Activated CD4-positive, alpha-beta T cell treated with anti-CD3 and anti-CD28 coated beads for 36 hours (primary cell): ENCODE measurements at regions of chr12 and their contacts with region 1.

Region 1: DNA sequence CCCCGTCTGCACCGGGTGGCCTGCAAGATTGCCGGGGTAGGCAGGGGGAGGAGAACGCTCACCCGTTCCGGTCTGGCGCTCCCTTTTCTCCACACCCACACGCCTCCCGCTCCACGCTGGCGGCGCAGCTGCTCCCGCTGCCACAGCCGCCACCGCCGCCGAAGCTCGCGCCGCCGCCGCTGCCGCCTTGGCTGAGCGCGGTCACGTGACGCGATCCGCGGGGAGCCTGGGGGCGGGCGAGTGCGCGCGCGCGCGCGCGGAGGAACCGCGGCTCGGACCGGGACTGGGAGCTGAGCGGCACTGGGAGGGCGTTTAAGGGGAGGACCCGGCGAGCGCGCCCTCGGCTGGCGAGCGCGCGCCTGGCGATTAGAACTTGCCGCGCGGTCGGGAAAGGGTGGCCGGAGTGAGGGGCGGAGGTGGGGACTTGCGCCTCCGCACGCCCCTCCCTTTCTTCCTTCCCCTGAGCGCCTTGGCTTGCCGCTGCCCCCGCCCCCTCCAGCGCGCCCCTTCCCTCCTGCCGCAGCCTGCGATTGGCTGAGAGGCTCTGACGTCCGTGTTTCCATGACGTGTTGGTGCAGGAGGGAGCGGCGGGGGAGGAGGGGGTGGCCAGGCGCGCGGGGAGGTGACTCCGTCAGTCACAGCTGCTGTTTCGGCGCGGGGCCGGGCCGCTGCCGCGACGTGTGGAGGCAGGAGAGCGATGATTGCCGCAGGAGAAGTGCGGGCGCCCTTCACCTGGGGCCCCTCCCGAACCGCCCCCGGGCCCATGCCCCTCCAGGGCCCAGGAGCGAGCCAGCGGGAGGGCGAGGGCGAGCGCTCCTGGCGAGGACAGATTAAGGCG is 738 bp upstream of the ATP2B1 start:
- DNase-seq: peak; percentile 99
- ATAC-seq: peak; percentile 81
- H3K4me3 Mint-ChIP-seq: peak overlapping the region; percentile 79
- H3K27ac Mint-ChIP-seq: peak overlapping the region; percentile 84
- H3K4me1 Mint-ChIP-seq: peaks cover 30% of the 10 kb centered on the region
- H3K27me3 Mint-ChIP-seq: no peaks in the 10 kb centered on the region

Region 2: GRCh38 chr12:88141770-88142609 is 1567.4 kb before region 1 on chr12 and contains the starts of genes CEP290 and TMTC3:
- CTCF ChIA-PET with region 1: no interaction called
- POLR2A ChIA-PET with region 1: no interaction called
- intact Hi-C with region 1: loop called in 1 of 2 experiments (anchors 5 kb)
- DNase-seq: peak; percentile 95
- ATAC-seq: peak; percentile 98
- H3K4me3 Mint-ChIP-seq: peak within 1 kb of the TSS; percentile 94
- H3K27ac Mint-ChIP-seq: peak within 1 kb of the TSS; percentile 92
- H3K4me1 Mint-ChIP-seq: peaks cover 42% of the 10 kb centered on the region
- H3K27me3 Mint-ChIP-seq: no peaks in the 10 kb centered on the region
- total RNA-seq, gene CEP290: 15.5 to 17.0 TPM
- total RNA-seq, gene TMTC3: 5.8 to 6.2 TPM

Region 3: DNA sequence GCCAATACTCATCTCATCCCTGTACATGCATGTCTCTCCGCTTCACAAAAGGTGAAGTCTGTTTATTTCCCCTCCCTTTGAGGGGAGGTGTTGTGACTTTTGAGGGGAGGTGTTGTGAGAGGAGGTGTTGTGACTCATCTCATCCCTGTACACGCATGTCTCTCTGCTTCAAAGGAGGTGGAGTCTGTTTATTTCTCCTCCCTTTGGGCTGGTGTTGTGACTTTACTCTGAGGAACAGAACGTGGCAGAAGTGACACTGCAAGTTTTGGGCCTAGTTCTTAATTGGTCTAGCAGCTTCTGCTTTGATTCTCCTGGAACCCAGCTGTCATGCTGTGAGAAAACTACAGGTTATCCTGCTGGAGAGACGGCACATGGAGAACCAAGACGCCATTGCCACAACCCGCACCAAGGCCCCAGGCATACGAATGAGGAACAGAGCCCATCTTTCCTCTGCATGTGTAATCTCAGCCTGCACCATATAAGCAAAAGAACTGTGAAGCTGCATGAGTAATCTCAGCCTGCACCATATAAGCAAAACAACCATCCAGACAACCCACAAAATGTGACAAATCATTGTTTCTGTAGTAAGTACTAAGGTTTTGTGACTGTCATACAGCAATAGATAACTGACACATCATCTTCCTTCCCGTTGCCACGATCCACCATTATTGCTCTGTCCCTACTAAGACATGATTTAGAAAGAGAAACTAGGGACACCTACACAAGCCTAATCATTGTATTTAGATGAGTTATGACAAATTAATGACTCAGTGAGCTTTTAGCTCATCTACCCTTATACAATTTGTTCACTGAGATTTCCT is 214.8 kb before region 1 on chr12:
- CTCF ChIA-PET with region 1: no interaction called
- POLR2A ChIA-PET with region 1: no interaction called
- intact Hi-C with region 1: loop called in 1 of 2 experiments (anchors 1 kb)
- DNase-seq: peak; percentile 72
- ATAC-seq: peak; percentile 90
- H3K4me3 Mint-ChIP-seq: peak overlapping the region; percentile 28
- H3K27ac Mint-ChIP-seq: peak overlapping the region; percentile 92
- H3K4me1 Mint-ChIP-seq: peaks cover 27% of the 10 kb centered on the region
- H3K27me3 Mint-ChIP-seq: no peaks in the 10 kb centered on the region

Region 4: GRCh38 chr12:89597770-89598169 is 111.6 kb before region 1 on chr12:
- CTCF ChIA-PET with region 1: interaction called, 3 read pairs
- POLR2A ChIA-PET with region 1: no interaction called
- intact Hi-C with region 1: loop called (anchors 2 to 5 kb)
- DNase-seq: no peak
- ATAC-seq: peak; percentile 44
- H3K4me3 Mint-ChIP-seq: peak overlapping the region; percentile 33
- H3K27ac Mint-ChIP-seq: no peak overlapping the region
- H3K4me1 Mint-ChIP-seq: peaks cover 24% of the 10 kb centered on the region
- H3K27me3 Mint-ChIP-seq: no peaks in the 10 kb centered on the region

Region 5: GRCh38 chr12:89733579-89734201 is 24.3 kb after region 1 on chr12:
- CTCF ChIA-PET with region 1: no interaction called
- POLR2A ChIA-PET with region 1: no interaction called
- intact Hi-C with region 1: no loop called
- DNase-seq: no peak
- ATAC-seq: no peak
- H3K4me3 Mint-ChIP-seq: no peak overlapping the region
- H3K27ac Mint-ChIP-seq: no peak overlapping the region
- H3K4me1 Mint-ChIP-seq: peaks cover 5% of the 10 kb centered on the region
- H3K27me3 Mint-ChIP-seq: no peaks in the 10 kb centered on the region

Region 6: DNA sequence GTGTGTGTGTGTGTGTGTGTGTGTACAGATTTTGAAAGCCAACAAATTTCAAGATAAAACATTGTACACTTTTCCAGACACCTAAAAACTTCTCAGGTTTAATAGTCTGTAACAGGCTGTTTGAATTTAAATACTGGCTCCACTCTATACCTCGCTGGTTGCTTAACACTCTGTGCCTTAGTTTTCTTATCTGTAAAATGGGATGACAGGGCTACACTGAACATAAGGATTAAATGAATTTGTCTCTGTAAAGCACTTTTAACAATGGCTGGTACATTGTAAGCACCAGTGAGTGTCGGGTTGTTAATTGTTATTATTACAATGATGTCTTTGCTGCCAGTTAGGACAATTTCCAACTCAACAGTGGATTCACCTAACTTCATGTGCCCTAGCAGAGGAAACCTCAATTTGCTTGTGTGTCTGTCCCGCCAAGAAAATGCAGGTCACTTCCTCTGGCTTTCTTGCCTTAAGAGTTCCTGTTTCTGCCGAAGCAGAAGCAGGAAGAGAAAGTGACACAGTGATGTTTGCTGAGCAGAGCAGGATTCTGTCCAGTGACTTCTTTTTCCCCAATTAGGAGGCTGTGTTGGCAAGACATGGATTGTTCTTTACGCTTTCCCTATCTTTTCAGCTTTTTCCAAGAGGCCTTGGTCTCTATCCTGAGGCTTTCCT is 153.3 kb after region 1 on chr12:
- CTCF ChIA-PET with region 1: interaction called, 3 read pairs
- POLR2A ChIA-PET with region 1: no interaction called
- intact Hi-C with region 1: loop called (anchors 1 to 2 kb)
- DNase-seq: peak; percentile 45
- ATAC-seq: peak; percentile 40
- H3K4me3 Mint-ChIP-seq: peak overlapping the region; percentile 70
- H3K27ac Mint-ChIP-seq: peak overlapping the region; percentile 98
- H3K4me1 Mint-ChIP-seq: peaks cover 64% of the 10 kb centered on the region
- H3K27me3 Mint-ChIP-seq: no peaks in the 10 kb centered on the region

Region 7: GRCh38 chr12:89960011-89960507 is 250.7 kb after region 1 on chr12:
- CTCF ChIA-PET with region 1: no interaction called
- POLR2A ChIA-PET with region 1: no interaction called
- intact Hi-C with region 1: loop called in 1 of 2 experiments (anchors 5 kb)
- DNase-seq: peak; percentile 47
- ATAC-seq: peak; percentile 97
- H3K4me3 Mint-ChIP-seq: no peak overlapping the region
- H3K27ac Mint-ChIP-seq: no peak overlapping the region
- H3K4me1 Mint-ChIP-seq: peaks cover 17% of the 10 kb centered on the region
- H3K27me3 Mint-ChIP-seq: no peaks in the 10 kb centered on the region

Region 8: DNA sequence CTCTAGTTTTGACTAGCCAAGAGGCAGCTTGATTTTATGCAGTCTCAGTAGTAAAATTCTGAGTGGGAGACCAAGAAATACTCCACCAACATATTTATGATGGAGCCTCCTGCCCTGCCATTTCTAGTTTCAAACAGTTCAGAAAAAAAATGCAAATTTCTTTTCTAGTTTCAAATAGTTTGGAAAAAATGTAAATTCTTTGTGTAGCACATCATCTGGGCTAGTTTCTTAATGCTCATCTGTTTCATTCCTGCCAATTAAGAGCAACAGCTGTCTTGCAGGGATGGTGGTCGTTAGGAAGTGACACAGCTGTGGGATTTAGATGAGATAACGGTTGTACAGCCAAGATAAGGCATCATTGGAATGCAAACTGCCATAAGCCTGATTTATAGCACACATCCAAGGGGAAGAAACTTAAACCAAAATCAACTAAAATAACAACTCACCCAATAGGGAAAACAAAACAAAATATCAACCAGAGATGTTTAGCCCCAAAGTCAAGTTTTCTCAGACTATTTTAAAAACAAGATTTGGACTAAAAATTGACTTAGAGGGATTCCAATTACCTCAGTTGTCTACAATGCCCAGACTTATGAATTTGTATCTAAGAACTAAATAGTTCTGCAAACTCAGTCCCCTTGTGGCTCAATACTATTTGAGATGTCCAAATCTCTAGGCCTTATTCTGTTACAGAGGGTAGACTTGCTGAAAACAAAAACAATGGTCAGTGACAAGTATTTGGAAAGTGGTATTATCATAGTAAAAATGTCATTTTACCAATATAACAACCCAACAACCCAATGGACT is 290.5 kb after region 1 on chr12:
- CTCF ChIA-PET with region 1: no interaction called
- POLR2A ChIA-PET with region 1: no interaction called
- intact Hi-C with region 1: no loop called
- DNase-seq: no peak
- ATAC-seq: no peak
- H3K4me3 Mint-ChIP-seq: no peak overlapping the region
- H3K27ac Mint-ChIP-seq: no peak overlapping the region
- H3K4me1 Mint-ChIP-seq: peaks cover 8% of the 10 kb centered on the region
- H3K27me3 Mint-ChIP-seq: no peaks in the 10 kb centered on the region